Heart right ventricle (tissue), 16 donors: ENCODE measurements at regions of chr9 and their contacts with region 1.

Region 1: DNA sequence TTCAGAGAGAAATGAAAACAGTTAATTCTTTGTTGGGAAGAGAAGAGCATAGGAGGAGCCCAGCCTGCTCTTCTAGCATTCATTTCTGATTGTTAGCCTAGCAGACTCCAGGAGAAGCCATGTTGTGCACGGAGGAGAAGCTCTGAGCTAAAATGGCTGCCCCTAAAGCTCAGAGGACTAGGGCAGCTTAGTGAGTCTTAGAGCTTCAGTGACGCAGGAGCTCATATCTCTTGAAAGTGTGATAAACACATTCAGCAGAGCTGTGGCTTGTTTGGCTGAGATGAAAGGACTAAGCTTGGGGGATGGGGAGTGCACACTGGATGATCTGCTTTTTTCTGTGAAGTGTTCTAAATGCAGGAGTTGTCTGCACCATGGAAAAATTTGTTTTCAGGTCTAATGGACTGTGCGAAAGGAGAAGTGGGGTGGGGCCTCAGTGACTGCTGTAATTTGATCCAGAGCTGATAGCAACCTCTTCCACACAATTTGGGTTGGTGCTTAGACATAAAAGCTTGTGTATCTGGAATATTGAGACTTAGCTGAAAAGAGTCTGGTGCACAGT is 58.5 kb downstream of the ZNF462 start:
- DNase-seq: peak in 1 of 2 donors; percentile 77
- ATAC-seq: peak; percentile 84 to 95 (median 91)
- H3K4me3 ChIP-seq: peak overlapping the region in 5 of 10 donors; percentile 0 to 35 (median 19)
- H3K27ac ChIP-seq: peak overlapping the region; percentile 60 to 95 (median 92)
- H3K4me1 ChIP-seq: peaks cover under 1 to 70% (median 49%) of the 10 kb centered on the region in 9 donors
- H3K27me3 ChIP-seq: no peaks in the 10 kb centered on the region
- CTCF ChIP-seq: no peak

Region 2: DNA sequence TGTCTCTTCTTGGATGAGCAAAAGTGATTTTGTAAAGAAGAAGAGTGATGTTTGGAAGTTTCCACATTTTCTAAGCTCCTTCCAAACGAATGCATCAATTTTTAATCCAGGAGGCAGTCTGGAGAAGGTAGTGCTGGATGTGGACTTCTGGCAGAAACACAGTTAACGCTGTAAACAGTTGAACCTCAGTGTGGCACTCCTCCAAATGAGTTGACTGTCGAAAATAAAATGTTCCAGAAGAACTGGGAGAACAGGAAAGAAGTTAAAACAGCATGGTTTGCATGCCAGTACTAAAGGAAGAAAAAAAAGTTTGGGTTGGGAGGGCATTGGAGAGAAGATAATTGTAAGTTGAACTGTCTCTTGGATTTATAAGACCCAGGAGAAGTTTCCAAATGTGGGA is 52.0 kb before region 1 on chr9:
- intact Hi-C with region 1: loop called in 5 of 10 experiments (anchors 2 to 10 kb)
- DNase-seq: peak in 1 of 2 donors; percentile 34
- ATAC-seq: peak in 5 of 8 donors; percentile 26 to 76 (median 41)
- H3K4me3 ChIP-seq: no peak overlapping the region
- H3K27ac ChIP-seq: peak overlapping the region; percentile 11 to 81 (median 54)
- H3K4me1 ChIP-seq: peaks cover 6 to 95% (median 52%) of the 10 kb centered on the region in 9 donors
- H3K27me3 ChIP-seq: peaks cover 0 to 8% (median 0%) of the 10 kb centered on the region in 7 donors
- CTCF ChIP-seq: no peak

Region 3: DNA sequence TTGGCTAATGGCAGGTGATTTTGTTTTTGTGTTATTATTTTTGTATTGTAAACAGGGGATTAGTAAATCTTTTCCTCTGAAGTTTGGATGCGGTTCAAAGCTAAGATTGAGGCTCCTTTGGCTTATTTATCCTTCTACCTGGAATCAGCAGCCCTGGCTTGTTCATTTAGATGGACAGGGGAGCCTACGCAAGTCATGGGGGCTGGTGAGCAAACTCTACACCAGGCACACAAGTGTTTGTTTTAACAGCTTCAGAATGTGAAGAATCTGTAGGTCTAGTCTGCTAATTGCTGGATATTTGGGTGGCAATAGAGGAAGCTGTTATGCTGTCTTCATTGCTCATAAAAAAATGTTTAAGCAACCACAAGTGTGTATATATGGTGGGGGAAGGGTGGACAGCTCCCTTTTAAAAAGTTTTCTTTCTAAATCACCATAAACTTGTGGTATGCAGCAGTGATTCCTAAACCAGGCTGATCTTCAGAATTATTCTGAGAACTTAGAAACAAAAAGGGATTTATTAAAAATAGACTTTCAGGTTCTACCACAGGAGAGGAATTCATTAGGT is 37.7 kb before region 1 on chr9:
- intact Hi-C with region 1: loop called in 1 of 10 experiments (anchors 5 kb)
- DNase-seq: no peak
- ATAC-seq: no peak
- H3K4me3 ChIP-seq: no peak overlapping the region
- H3K27ac ChIP-seq: no peak overlapping the region
- H3K4me1 ChIP-seq: peaks cover 4 to 70% (median 53%) of the 10 kb centered on the region in 9 donors
- H3K27me3 ChIP-seq: no peaks in the 10 kb centered on the region
- CTCF ChIP-seq: no peak

Region 4: GRCh38 chr9:106962615-106963363 is 41.4 kb after region 1 on chr9:
- intact Hi-C with region 1: loop called in 2 of 10 experiments (anchors 2 to 5 kb)
- DNase-seq: peak; percentile 13 to 83
- ATAC-seq: peak; percentile 83 to 98 (median 94)
- H3K4me3 ChIP-seq: no peak overlapping the region
- H3K27ac ChIP-seq: peak overlapping the region in 9 of 10 donors; percentile 56 to 81 (median 73)
- H3K4me1 ChIP-seq: peaks cover 0 to 71% (median 29%) of the 10 kb centered on the region in 9 donors
- H3K27me3 ChIP-seq: no peaks in the 10 kb centered on the region
- CTCF ChIP-seq: no peak